Motor neuron (in vitro differentiated cells): ENCODE measurements at regions of chr2 and their contacts with region 1.

Region 1: DNA sequence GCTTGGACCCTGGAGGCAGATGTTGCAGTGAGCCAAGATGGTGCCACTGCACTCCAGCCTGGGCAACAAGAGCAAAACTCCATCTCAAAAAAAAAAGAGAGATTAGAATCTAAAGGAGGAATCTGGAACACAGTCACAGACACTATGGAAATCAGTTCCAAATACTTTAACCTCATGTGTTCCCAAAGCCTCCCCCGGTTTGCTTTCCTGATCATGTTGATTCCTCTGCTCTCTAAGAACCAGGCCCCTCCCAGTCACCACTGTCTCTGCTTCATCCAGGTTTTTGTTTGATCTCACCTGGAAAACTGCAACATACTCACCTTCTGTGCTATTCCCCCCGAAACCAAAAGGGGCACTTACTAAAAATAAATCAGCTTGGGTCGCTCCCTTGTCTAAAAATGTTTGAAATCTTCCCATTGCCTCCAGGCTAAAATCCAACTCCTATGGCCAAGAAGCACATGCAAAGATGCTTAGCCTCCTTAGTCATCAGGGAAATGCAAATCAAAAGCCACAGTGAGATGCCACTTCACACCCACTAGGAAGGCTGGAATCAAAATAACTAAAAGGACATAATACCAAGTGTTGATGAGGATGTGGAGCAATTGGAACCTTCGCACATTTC is 6.2 kb upstream of the NEU2 start:
- ATAC-seq: peak in 3 of 8 experiments; percentile 86 to 96 (median 94)
- H3K4me3 ChIP-seq: no peak overlapping the region
- H3K27ac ChIP-seq: no peak overlapping the region
- H3K4me1 ChIP-seq: peaks cover 0 to 4% of the 10 kb centered on the region in 2 donors

Region 2: GRCh38 chr2:232854082-232854481 is 172.2 kb before region 1 on chr2:
- in situ Hi-C with region 1: loop called in 1 of 9 experiments (anchors 25 kb)
- ATAC-seq: peak in 2 of 8 experiments; percentile 52
- H3K4me3 ChIP-seq: no peak overlapping the region
- H3K27ac ChIP-seq: no peak overlapping the region
- H3K4me1 ChIP-seq: no peaks in the 10 kb centered on the region